ENCODE measurements at regions of chr5 and their contacts with region 1.

Region 1: GRCh38 chr5:7745882-7746610 is 104.9 kb downstream of the CFAP90 start:
- DNase-seq: no peak
- H3K4me3 Mint-ChIP-seq: no peak overlapping the region
- H3K27ac Mint-ChIP-seq: no peak overlapping the region
- H3K4me1 Mint-ChIP-seq: no peaks in the 10 kb centered on the region
- H3K27me3 Mint-ChIP-seq: peaks cover 1% of the 10 kb centered on the region

Region 2: GRCh38 chr5:6765612-6766525 is 980.2 kb before region 1 on chr5:
- intact Hi-C with region 1: loop called (anchors 5 kb)
- DNase-seq: peak; percentile 69
- H3K4me3 Mint-ChIP-seq: no peak overlapping the region
- H3K27ac Mint-ChIP-seq: peak overlapping the region; percentile 17
- H3K4me1 Mint-ChIP-seq: peaks cover 5% of the 10 kb centered on the region
- H3K27me3 Mint-ChIP-seq: no peaks in the 10 kb centered on the region

Region 3: GRCh38 chr5:7659420-7659819 is 86.6 kb before region 1 on chr5:
- intact Hi-C with region 1: no loop called
- DNase-seq: no peak
- H3K4me3 Mint-ChIP-seq: no peak overlapping the region
- H3K27ac Mint-ChIP-seq: no peak overlapping the region
- H3K4me1 Mint-ChIP-seq: no peaks in the 10 kb centered on the region
- H3K27me3 Mint-ChIP-seq: no peaks in the 10 kb centered on the region

Region 4: GRCh38 chr5:7686794-7687193 is 59.3 kb before region 1 on chr5:
- intact Hi-C with region 1: no loop called
- DNase-seq: no peak
- H3K4me3 Mint-ChIP-seq: no peak overlapping the region
- H3K27ac Mint-ChIP-seq: no peak overlapping the region
- H3K4me1 Mint-ChIP-seq: no peaks in the 10 kb centered on the region
- H3K27me3 Mint-ChIP-seq: no peaks in the 10 kb centered on the region